ENCODE measurements at regions of chr6 and their contacts with region 1.

Region 1: DNA sequence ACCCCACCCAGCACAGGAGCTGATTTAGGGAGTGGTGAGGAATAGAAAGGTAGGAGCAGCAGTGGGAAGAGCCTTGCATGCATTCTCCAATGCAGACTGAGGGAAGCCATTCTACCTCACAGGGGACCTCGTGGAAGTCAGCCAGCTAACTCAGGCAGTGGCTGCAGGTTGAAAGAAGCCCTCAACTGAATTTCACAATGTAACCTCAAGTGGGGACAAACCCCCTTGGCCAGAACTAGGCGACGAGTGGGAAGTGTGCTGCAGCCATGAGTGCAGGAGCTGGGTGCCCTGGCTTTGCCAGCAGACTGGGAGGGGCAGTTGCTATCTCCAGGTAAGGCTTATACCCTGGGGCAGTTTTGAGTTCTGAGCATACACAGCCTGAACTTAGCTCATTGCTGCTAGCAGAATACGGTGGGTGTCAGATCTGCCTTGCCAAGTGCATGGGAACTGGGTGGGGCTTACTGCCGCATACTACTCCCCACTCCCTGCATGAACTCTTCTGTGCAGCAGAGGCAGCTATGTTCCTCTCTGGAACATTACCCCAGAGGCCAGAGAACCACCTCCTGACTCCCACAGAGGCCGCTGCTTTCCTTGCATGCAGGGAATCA is 126.5 kb downstream of the CDK19 start:
- DNase-seq: no peak
- ATAC-seq: no peak

Region 2: GRCh38 chr6:110609101-110609500 is 79.7 kb before region 1 on chr6:
- intact Hi-C with region 1: no loop called
- DNase-seq: no peak
- ATAC-seq: peak; percentile 38 to 39

Region 3: GRCh38 chr6:110712238-110712637 is 23.5 kb after region 1 on chr6:
- intact Hi-C with region 1: loop called in 1 of 2 experiments (anchors 2 kb)
- DNase-seq: no peak
- ATAC-seq: no peak

Region 4: GRCh38 chr6:110944681-110945151 is 256.0 kb after region 1 on chr6:
- intact Hi-C with region 1: loop called in 1 of 2 experiments (anchors 5 kb)
- DNase-seq: no peak
- ATAC-seq: peak in 1 of 2 donors; percentile 97